PC-3 (cell line): ENCODE measurements at regions of chr1 and their contacts with region 1.

Region 1: DNA sequence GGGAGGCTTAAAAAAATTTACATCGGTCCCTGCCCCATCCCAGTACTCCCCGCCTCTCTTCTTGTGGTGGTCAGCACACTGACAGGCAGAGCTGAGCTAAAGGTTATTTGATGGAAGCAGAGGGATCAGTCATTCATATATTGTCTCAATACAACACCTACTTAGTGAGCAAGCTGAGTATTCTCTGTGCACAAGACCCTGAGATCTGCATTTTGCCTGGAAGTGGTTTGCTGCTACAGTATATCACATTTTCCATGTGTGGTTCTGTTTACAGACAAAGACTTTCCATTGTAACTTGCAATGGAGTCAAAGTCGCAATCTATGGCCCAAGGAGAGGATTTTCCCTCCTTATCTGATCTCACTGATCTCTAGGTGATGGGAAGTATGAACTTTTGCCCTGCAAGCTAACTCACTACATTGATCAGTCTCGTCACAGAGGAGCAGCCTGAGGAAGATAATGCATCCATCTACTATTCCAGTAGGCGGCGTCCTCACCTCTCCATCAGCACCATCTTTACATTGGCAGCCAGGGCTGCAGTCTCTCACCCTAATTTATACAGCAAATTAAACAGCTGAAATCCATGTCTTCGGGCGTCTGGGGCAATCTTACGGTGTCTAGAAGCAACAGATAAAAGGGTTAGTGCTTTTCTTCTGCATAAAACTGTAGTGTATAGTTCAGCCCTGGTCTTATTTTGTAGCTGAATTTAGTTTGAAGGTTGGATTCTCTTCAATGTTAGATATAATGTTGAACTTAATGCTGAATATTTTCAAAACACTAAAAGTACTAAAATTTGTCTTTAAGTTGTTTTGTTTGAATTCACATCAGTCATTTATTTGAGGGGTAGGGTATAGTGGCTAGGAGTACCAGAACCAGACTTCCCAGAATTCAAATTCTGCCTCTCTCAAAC is 3.2 kb upstream of the TRAF5 start:
- DNase-seq: peak; percentile 76
- ATAC-seq: peak; percentile 62
- H3K4me3 ChIP-seq: no peak overlapping the region
- H3K27ac ChIP-seq: no peak overlapping the region
- H3K4me1 ChIP-seq: peaks cover 17% of the 10 kb centered on the region
- H3K27me3 ChIP-seq: no peaks in the 10 kb centered on the region
- CTCF ChIP-seq: peak; percentile 97

Region 2: DNA sequence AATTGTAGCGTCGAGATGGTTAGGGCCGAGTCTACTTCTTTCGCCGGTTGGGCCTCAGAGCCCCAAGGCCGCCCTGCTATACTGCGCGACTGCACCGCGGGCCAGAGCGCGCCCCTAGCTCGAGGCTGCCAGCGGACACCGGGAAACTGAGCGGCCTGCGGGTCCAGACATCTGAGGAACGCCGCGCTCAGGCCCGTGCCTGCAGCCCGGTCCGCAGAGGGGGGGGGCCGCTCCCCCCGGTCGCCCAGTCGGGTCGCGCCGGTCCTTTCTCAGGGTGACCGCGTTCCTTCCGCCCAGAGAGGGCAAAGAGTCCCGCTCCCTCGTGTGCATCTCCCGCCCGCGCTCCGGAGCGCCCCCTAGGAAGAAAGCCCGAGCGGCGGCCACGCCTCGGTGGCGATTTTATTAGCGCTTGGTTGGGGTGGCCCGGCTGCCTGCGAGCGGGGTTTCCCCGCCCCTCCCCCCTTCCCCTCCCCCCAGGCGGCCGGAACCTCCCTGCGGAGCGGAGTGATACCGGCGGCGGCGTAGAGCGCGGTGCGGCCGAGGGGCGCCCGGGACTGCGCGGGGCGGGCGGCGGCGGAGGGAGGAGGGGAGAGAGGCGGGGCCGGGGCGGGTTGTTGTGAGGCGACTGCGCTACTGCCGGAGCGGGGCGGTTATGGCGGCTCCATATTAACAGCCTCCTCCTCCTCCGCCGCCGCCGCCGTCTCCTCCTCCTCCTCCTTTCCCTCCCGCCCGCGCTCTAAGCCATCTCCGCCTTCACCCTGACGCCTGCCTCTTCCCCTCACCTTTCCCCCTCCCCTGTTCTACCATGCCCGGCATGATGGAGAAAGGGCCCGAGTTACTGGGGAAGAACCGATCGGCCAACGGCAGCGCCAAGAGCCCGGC is 64.4 kb before region 1 on chr1 and contains the start of gene RCOR3:
- CTCF ChIA-PET with region 1: no interaction called
- POLR2A ChIA-PET with region 1: interaction called, 10 read pairs
- intact Hi-C with region 1: loop called (anchors 2 kb)
- DNase-seq: peak; percentile 89
- ATAC-seq: peak; percentile 70
- H3K4me3 ChIP-seq: peak within 1 kb of the TSS; percentile 98
- H3K27ac ChIP-seq: peak within 1 kb of the TSS; percentile 77
- H3K4me1 ChIP-seq: peaks cover 17% of the 10 kb centered on the region
- H3K27me3 ChIP-seq: no peaks in the 10 kb centered on the region
- CTCF ChIP-seq: peak; percentile 51
- total RNA-seq, gene RCOR3: 12.7 and 20.4 TPM in 2 replicates

Region 3: GRCh38 chr1:211352985-211353515 is 29.6 kb after region 1 on chr1:
- CTCF ChIA-PET with region 1: no interaction called
- POLR2A ChIA-PET with region 1: no interaction called
- intact Hi-C with region 1: loop called (anchors 1 kb)
- DNase-seq: peak; percentile 63
- ATAC-seq: peak; percentile 76
- H3K4me3 ChIP-seq: no peak overlapping the region
- H3K27ac ChIP-seq: no peak overlapping the region
- H3K4me1 ChIP-seq: no peaks in the 10 kb centered on the region
- H3K27me3 ChIP-seq: no peaks in the 10 kb centered on the region
- CTCF ChIP-seq: peak; percentile 95

Region 4: DNA sequence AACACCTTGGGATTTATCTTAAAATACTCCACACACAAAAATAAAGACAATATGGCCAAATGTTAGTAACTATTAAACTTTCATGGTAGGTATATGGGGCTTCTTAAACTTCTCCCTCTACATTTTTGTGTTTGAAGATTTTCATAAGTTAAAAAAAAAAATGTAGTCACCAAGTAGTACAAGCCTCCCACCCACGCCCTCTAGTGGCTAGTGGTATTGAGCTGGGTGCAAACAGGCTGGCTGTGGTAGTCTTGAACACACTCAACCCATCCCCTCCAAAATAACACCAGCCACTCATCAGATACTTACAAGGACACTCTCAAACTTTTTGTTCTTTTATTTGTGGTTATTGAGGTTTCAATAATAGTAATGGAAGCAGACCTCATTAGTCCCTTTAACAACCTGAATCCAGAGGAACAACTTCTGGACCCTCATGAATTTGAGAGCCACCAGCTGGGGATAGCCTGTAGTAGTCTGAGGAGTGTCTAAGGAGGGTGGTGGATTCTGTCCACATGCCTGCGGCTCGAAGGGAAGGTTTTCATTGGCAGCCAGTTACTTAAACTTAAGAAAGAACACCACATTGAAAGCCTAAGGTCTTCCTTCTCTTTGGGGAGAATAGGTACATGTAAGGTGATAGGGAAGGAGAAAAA is 152.9 kb after region 1 on chr1:
- CTCF ChIA-PET with region 1: interaction called, 5 read pairs
- POLR2A ChIA-PET with region 1: no interaction called
- intact Hi-C with region 1: loop called (anchors 1 kb)
- DNase-seq: peak; percentile 81
- ATAC-seq: peak; percentile 87
- H3K4me3 ChIP-seq: no peak overlapping the region
- H3K27ac ChIP-seq: no peak overlapping the region
- H3K4me1 ChIP-seq: no peaks in the 10 kb centered on the region
- H3K27me3 ChIP-seq: peaks cover 7% of the 10 kb centered on the region
- CTCF ChIP-seq: peak; percentile 97

Region 5: DNA sequence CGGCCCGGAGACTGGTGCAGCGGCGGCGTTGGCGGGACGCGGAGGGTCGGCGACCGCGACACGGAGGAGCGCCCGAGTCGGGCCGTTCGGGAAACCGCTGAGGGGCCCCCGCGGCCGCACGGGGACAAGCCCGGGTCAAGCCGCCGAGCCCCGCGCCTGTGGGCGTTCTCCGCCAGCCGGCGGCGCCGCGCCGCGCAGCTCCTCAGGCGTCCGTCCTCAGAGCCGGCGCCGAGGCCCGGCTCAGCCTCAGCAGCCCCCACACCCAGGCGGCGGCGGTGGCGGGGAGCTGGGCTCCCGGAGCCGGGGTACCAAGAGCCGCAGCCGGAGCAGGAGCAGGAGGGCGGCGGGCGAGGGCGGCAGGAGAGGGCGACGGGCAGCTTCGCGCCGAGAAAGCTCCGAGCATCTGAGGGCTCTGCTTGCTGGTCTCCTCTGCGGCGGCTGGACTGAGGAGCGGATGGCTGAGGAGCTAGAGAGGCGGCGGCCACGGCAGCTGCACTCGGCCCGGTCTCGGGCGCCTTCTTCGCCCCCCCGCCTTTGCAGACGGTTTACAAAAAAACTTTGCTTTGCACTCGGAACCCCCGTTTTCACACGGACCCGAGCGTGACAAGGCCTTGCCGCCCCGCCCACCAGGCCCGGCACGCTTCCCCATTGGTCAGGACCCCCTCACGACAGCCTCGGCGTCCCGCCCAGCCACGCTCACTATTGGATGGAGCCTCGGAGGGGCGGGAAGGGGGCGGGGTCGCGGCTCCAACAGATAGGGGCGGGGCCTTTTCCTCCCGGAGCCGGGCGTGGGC is 255.4 kb after region 1 on chr1 and contains the start of gene SLC30A1:
- CTCF ChIA-PET with region 1: no interaction called
- POLR2A ChIA-PET with region 1: no interaction called
- intact Hi-C with region 1: loop called (anchors 5 kb)
- DNase-seq: peak; percentile 99
- ATAC-seq: peak; percentile 84
- H3K4me3 ChIP-seq: peak within 1 kb of the TSS; percentile 86
- H3K27ac ChIP-seq: peak within 1 kb of the TSS; percentile 24; the same call in 1 of the 2 replicates
- H3K4me1 ChIP-seq: peaks cover 36% of the 10 kb centered on the region
- H3K27me3 ChIP-seq: no peaks in the 10 kb centered on the region
- CTCF ChIP-seq: no peak
- total RNA-seq, gene SLC30A1: 6.7 and 8.2 TPM in 2 replicates